ENCODE measurements at regions of chr6 and their contacts with region 1.

Region 1: GRCh38 chr6:53794720-53795253 is at the start of gene LRRC1:
- DNase-seq: peak; percentile 74 to 96
- H3K4me3 ChIP-seq: peak within 1 kb of the TSS; percentile 86
- H3K27ac ChIP-seq: peak within 1 kb of the TSS; percentile 70
- H3K4me1 ChIP-seq: peaks cover 32% of the 10 kb centered on the region
- H3K27me3 ChIP-seq: no peaks in the 10 kb centered on the region
- CTCF ChIP-seq: no peak
- total RNA-seq, gene LRRC1: 23.0 and 26.4 TPM in 2 replicates

Region 2: DNA sequence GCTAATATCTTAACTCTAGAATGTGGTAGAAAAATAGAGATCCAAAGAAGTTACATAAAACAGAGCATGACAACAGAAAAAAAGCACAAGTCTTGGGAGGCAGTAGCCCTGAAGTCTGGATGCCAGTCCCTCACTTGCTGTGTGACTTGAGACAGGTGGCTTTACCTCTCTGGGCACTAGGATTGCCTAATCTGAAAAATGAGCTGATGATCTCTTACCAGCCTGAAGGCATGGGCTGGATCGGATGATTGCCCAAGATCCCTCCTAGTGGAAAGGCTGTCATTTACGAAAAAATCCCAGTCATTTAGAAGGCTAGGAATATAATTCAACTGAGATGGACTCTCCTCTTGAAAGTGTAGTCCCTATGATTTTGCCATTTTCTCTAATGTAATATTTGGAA is 635.2 kb before region 1 on chr6:
- CTCF ChIA-PET with region 1: no interaction called
- POLR2A ChIA-PET with region 1: interaction called, 20 read pairs
- intact Hi-C with region 1: no loop called
- DNase-seq: peak in 1 of 2 experiments; percentile 62
- H3K4me3 ChIP-seq: no peak overlapping the region
- H3K27ac ChIP-seq: no peak overlapping the region
- H3K4me1 ChIP-seq: peaks cover 31% of the 10 kb centered on the region
- H3K27me3 ChIP-seq: no peaks in the 10 kb centered on the region
- CTCF ChIP-seq: no peak

Region 3: GRCh38 chr6:53544470-53545308 is 250.1 kb before region 1 on chr6 and contains the start of gene GCLC:
- CTCF ChIA-PET with region 1: no interaction called
- POLR2A ChIA-PET with region 1: interaction called, 4 read pairs
- intact Hi-C with region 1: loop called (anchors 5 kb)
- DNase-seq: peak; percentile 85 to 95
- H3K4me3 ChIP-seq: peak within 1 kb of the TSS; percentile 79
- H3K27ac ChIP-seq: peak within 1 kb of the TSS; percentile 96
- H3K4me1 ChIP-seq: peaks cover 52% of the 10 kb centered on the region
- H3K27me3 ChIP-seq: no peaks in the 10 kb centered on the region
- CTCF ChIP-seq: peak; percentile 61; the same call in 1 of the 2 replicates
- total RNA-seq, gene GCLC: 213 and 254 TPM in 2 replicates

Region 4: GRCh38 chr6:53734473-53735299 is 60.1 kb before region 1 on chr6:
- CTCF ChIA-PET with region 1: no interaction called
- POLR2A ChIA-PET with region 1: interaction called, 13 read pairs
- intact Hi-C with region 1: loop called (anchors 1 kb)
- DNase-seq: peak; percentile 59 to 96
- H3K4me3 ChIP-seq: peak overlapping the region; percentile 44
- H3K27ac ChIP-seq: peak overlapping the region; percentile 95
- H3K4me1 ChIP-seq: peaks cover 53% of the 10 kb centered on the region
- H3K27me3 ChIP-seq: no peaks in the 10 kb centered on the region
- CTCF ChIP-seq: peak; percentile 61

Region 5: DNA sequence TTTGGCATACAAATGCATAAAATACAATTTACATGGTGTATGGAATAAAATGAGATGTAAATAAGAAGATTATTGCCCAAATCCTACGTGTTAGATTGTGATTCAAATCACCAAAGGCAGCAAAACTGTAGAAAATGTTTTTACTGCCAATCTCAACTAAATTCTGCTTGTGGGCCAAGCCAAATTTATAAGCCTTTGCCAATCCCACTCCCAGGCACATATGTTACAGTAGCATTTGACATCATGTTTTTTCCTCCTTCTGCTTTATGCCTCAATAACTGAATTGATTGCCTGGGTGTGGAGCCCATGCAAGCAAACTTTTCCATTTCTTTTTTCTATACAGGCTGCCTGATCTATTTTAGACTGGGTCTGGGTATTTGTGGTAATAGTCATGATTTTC is 36.3 kb before region 1 on chr6:
- CTCF ChIA-PET with region 1: no interaction called
- POLR2A ChIA-PET with region 1: no interaction called
- intact Hi-C with region 1: no loop called
- DNase-seq: no peak
- H3K4me3 ChIP-seq: no peak overlapping the region
- H3K27ac ChIP-seq: no peak overlapping the region
- H3K4me1 ChIP-seq: peaks cover 3% of the 10 kb centered on the region
- H3K27me3 ChIP-seq: no peaks in the 10 kb centered on the region
- CTCF ChIP-seq: no peak

Region 6: DNA sequence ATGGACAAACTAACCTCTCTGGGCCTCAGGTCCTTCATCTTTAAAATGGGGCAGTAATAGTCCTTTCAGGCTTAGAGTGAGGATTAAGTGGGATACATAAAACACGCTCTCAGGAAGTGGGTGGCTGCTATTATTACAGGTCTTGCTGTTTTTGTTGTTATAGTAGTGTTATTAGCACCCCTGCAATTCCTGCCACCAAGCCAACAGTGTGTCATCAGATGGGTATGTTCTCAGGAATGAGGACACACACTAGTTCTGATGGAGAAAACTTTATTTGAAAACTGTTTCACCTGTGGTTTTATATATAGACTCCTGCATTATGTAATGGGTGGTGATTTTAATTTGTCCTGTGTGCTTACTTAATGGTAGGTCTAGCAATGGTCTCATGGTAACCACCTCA is 131.7 kb after region 1 on chr6:
- CTCF ChIA-PET with region 1: no interaction called
- POLR2A ChIA-PET with region 1: no interaction called
- intact Hi-C with region 1: loop called (anchors 1 kb)
- DNase-seq: peak; percentile 12 to 88
- H3K4me3 ChIP-seq: peak overlapping the region; percentile 39; the same call in 1 of the 2 replicates
- H3K27ac ChIP-seq: peak overlapping the region; percentile 87
- H3K4me1 ChIP-seq: peaks cover 70% of the 10 kb centered on the region
- H3K27me3 ChIP-seq: no peaks in the 10 kb centered on the region
- CTCF ChIP-seq: no peak